AG04450 (cell line): ENCODE measurements at regions of chr3 and their contacts with region 1.

Region 1: GRCh38 chr3:151168269-151169094 is 34.5 kb downstream of the GPR171 start:
- DNase-seq: peak; percentile 18
- H3K4me3 ChIP-seq: no peak overlapping the region
- H3K27ac ChIP-seq: no peak overlapping the region
- H3K27me3 ChIP-seq: no peaks in the 10 kb centered on the region
- CTCF ChIP-seq: peak; percentile 86

Region 2: DNA sequence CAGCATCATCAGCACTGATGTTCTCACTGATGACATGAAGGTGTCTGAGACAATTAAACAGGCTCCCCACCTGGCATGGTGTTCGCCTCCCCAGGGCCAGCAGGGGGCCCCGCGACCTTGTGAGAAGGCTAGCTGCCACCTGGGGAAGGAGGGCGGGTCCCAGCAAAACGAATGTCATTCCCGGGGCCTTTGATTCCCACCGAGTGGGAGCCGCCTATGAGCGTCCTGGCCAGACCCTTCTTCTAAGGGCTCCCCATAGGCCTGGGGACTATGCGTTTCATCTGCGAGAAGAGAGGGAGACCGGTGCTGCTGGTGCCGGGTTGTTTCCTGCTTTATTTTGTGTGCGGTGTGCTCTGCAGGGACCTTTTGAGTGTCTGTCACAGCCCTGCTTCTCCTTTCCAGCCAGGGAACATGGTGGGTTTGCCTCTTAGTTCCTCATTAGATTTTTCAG is 242.7 kb before region 1 on chr3:
- CTCF ChIA-PET with region 1: no interaction called
- POLR2A ChIA-PET with region 1: no interaction called
- DNase-seq: no peak
- H3K4me3 ChIP-seq: no peak overlapping the region
- H3K27ac ChIP-seq: no peak overlapping the region
- H3K27me3 ChIP-seq: peaks cover 15% of the 10 kb centered on the region
- CTCF ChIP-seq: peak; percentile 66

Region 3: GRCh38 chr3:151156618-151157216 is 11.8 kb before region 1 on chr3:
- CTCF ChIA-PET with region 1: interaction called, 17 read pairs
- POLR2A ChIA-PET with region 1: no interaction called
- DNase-seq: peak; percentile 23
- H3K4me3 ChIP-seq: no peak overlapping the region
- H3K27ac ChIP-seq: no peak overlapping the region
- H3K27me3 ChIP-seq: no peaks in the 10 kb centered on the region
- CTCF ChIP-seq: peak; percentile 63

Region 4: DNA sequence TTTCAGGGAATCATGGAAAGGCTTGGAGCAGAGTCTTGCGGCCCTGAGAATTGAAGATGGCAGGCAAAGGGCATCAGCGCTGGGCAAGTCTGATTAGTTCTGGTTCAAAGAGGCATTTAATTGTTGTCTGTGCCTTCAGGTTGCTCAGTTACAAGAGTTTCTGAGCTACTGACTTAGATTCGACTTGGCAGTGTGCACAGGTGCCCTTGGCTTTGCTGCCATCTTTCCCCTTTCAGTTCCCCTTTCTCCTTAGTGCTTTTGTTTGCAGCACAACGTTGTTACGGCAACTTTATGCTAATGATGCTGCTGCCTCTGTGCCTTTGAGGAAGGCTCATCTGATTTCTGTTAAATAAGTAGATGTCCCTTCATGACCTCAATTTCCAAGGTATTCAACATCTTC is 97.4 kb after region 1 on chr3:
- CTCF ChIA-PET with region 1: interaction called, 14 read pairs
- POLR2A ChIA-PET with region 1: no interaction called
- DNase-seq: no peak
- H3K4me3 ChIP-seq: no peak overlapping the region
- H3K27ac ChIP-seq: no peak overlapping the region
- H3K27me3 ChIP-seq: no peaks in the 10 kb centered on the region
- CTCF ChIP-seq: no peak

Region 5: DNA sequence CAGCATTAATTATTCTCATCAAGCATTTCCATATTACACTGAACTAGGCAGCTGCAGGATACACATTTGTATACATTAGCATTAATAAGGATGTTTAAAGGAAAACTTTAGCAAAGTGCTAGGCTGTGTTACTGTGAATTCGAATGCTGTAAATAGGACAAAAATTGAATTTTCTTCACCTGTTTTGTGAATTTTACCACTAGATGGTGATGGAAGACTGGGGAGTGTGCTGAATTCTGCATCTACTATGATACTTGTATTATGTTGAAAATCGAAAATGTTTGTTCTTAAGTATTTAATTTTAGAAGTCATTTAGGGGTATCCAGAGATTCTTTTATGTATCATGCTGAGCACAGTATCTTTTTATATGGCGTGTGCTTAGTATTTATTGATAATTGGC is 122.2 kb after region 1 on chr3:
- CTCF ChIA-PET with region 1: interaction called, 30 read pairs
- POLR2A ChIA-PET with region 1: no interaction called
- DNase-seq: no peak
- H3K4me3 ChIP-seq: no peak overlapping the region
- H3K27ac ChIP-seq: no peak overlapping the region
- H3K27me3 ChIP-seq: no peaks in the 10 kb centered on the region
- CTCF ChIP-seq: peak; percentile 64

Region 6: GRCh38 chr3:151327571-151328198 is 159.2 kb after region 1 on chr3:
- CTCF ChIA-PET with region 1: interaction called, 13 read pairs
- POLR2A ChIA-PET with region 1: no interaction called
- DNase-seq: no peak
- H3K4me3 ChIP-seq: no peak overlapping the region
- H3K27ac ChIP-seq: no peak overlapping the region
- H3K27me3 ChIP-seq: no peaks in the 10 kb centered on the region
- CTCF ChIP-seq: peak; percentile 64